GM12878 (cell line): ENCODE measurements at regions of chr1 and their contacts with region 1.

Region 1: DNA sequence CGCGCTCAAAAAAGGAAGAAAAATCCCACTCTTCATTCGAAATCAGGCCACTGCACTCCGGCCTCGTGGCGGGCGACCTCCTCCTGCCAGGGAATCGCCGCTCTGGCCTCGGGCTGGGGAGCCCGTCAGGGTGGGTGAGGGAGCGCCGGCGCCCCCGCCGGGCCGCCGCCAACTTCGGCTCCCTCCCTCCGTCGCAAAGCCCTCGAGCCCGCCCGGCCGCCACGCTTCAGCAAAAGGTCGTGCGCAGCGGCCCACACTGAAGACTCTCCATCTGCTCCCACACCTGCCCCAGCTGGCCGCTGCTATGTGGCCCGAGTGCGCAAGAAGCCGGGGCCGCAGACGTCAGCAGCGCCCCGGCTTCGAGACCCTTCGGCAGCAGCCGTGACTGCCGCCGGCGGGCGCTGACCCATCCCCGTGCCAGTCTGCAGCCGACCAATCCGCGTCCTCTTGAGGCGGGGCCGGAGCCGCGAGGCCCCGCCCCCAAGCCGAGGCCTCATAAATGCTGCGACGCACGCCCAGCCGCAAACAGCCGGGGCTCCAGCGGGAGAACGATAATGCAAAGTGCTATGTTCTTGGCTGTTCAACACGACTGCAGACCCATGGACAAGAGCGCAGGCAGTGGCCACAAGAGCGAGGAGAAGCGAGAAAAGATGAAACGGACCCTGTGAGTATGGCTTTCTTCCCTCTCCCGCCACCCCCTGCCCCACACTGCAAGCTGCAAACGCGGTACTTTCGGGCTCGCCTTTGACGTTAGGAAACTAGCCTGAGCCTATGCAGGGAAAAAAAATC is at the start of gene RGS2:
- DNase-seq: peak; percentile 36
- ATAC-seq: peak; percentile 93
- H3K4me3 ChIP-seq: peak within 1 kb of the TSS; percentile 66
- H3K27ac ChIP-seq: no peak within 1 kb of the TSS
- H3K4me1 ChIP-seq: peaks cover 11% of the 10 kb centered on the region
- H3K27me3 ChIP-seq: peaks cover 0 to 5% of the 10 kb centered on the region in 2 experiments; a peak in 3 of 4 replicates
- CTCF ChIP-seq: no peak
- EP300 ChIP-seq: no peak
- POLR2A ChIP-seq: peak; percentile 99
- RAD21 ChIP-seq: no peak
- polyA plus RNA-seq, gene RGS2: 1.9 to 2.3 TPM

Region 2: GRCh38 chr1:192732787-192733186 is 75.9 kb before region 1 on chr1:
- CTCF ChIA-PET with region 1: no interaction called
- POLR2A ChIA-PET with region 1: no interaction called
- RAD21 ChIA-PET with region 1: no interaction called
- SMC1A ChIA-PET with region 1: no interaction called
- in situ Hi-C with region 1: no loop called
- intact Hi-C with region 1: no loop called
- DNase-seq: no peak
- ATAC-seq: peak; percentile 79
- H3K4me3 ChIP-seq: no peak overlapping the region
- H3K27ac ChIP-seq: no peak overlapping the region
- H3K4me1 ChIP-seq: no peaks in the 10 kb centered on the region
- H3K27me3 ChIP-seq: no peaks in the 10 kb centered on the region
- CTCF ChIP-seq: peak in 2 of 3 experiments; percentile 7 to 22; a peak in 1 of 6 replicates
- EP300 ChIP-seq: no peak
- POLR2A ChIP-seq: no peak
- RAD21 ChIP-seq: no peak

Region 3: GRCh38 chr1:192913683-192914082 is 105.0 kb after region 1 on chr1:
- CTCF ChIA-PET with region 1: no interaction called
- POLR2A ChIA-PET with region 1: no interaction called
- RAD21 ChIA-PET with region 1: no interaction called
- SMC1A ChIA-PET with region 1: no interaction called
- in situ Hi-C with region 1: no loop called
- intact Hi-C with region 1: no loop called
- DNase-seq: no peak
- ATAC-seq: no peak
- H3K4me3 ChIP-seq: no peak overlapping the region
- H3K27ac ChIP-seq: no peak overlapping the region
- H3K4me1 ChIP-seq: no peaks in the 10 kb centered on the region
- H3K27me3 ChIP-seq: no peaks in the 10 kb centered on the region
- CTCF ChIP-seq: no peak
- EP300 ChIP-seq: no peak
- POLR2A ChIP-seq: no peak
- RAD21 ChIP-seq: no peak

Region 4: GRCh38 chr1:193013005-193013404 is 204.3 kb after region 1 on chr1:
- CTCF ChIA-PET with region 1: interaction called, 142 read pairs
- POLR2A ChIA-PET with region 1: no interaction called
- RAD21 ChIA-PET with region 1: interaction called, 10 read pairs
- SMC1A ChIA-PET with region 1: interaction called, 62 read pairs
- in situ Hi-C with region 1: loop called (anchors 5 kb)
- intact Hi-C with region 1: no loop called
- DNase-seq: no peak
- ATAC-seq: no peak
- H3K4me3 ChIP-seq: no peak overlapping the region
- H3K27ac ChIP-seq: no peak overlapping the region
- H3K4me1 ChIP-seq: no peaks in the 10 kb centered on the region
- H3K27me3 ChIP-seq: no peaks in the 10 kb centered on the region
- CTCF ChIP-seq: no peak
- EP300 ChIP-seq: no peak
- POLR2A ChIP-seq: no peak
- RAD21 ChIP-seq: no peak

Region 5: DNA sequence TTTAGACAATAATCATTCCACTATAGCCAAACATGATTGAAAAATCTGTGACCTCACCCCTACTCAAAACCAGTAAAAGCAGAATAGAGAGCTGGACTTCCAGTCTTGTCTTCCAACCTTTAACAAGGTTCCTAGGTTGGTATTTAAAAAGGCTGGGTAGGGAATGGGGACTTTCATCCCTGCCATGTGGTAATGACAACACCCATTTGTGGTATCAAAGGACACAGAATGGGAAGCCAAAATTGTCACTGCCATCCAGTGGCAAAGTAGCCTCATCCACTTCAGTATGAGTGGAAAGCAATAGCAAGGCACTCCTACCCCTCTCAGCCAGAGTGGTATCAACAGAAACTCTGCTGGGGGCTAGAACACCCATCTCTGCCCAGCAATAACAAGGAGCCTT is 216.5 kb after region 1 on chr1:
- CTCF ChIA-PET with region 1: interaction called, 142 read pairs
- POLR2A ChIA-PET with region 1: no interaction called
- RAD21 ChIA-PET with region 1: interaction called, 56 read pairs
- SMC1A ChIA-PET with region 1: interaction called, 62 read pairs
- in situ Hi-C with region 1: no loop called
- intact Hi-C with region 1: no loop called
- DNase-seq: no peak
- ATAC-seq: no peak
- H3K4me3 ChIP-seq: no peak overlapping the region
- H3K27ac ChIP-seq: no peak overlapping the region
- H3K4me1 ChIP-seq: no peaks in the 10 kb centered on the region
- H3K27me3 ChIP-seq: no peaks in the 10 kb centered on the region
- CTCF ChIP-seq: no peak
- EP300 ChIP-seq: no peak
- POLR2A ChIP-seq: no peak
- RAD21 ChIP-seq: no peak

Region 6: DNA sequence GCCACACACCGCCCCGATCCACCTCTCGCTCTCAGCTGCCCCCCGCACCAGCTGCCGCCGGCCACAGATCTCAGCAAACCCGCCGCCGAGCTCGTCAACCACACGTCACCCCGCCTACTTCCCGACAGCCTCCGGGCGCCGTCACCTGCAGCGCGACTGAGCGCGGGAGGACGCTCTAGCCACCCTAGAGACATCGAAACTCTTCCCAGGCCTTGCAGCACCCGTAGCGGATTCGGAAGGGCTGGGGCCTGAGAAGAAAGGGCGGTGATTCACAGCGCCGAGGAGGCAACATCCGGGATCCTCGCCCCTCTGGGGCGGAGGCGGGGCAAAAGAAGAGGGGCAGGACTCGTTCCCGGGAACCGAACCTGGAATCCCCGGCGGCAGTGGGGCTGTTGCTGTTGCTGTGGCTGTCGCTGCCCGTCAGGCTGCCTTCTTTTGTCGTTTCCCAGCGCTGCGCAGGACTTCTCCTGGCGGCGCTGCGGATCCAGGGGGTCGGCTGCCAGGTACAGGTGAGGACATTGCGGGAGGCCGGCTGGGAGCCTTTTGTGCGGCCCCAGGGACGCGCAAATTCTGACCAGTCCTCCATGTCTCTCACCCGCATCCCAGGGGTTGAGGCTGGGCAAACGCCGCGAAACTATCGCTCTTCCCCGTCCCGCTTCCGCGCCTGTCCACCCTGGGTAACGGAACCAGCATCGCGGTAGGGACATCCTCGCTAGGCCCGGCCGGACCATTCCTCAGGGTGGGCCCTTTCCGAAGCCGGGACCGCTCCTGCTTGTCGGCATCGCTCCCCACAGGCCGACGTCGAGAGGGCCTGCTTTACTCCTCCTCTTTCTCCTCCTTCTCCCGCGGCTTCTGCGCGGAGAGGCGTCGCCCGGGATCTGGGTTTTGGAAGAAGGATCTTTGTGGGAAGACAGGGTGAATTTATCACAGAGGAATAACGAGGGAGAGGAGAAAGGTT is 250.8 kb after region 1 on chr1 and contains the starts of genes RO60 and UCHL5:
- CTCF ChIA-PET with region 1: interaction called, 4 read pairs
- POLR2A ChIA-PET with region 1: interaction called, 6 read pairs
- RAD21 ChIA-PET with region 1: interaction called, 7 read pairs
- SMC1A ChIA-PET with region 1: interaction called, 11 read pairs
- in situ Hi-C with region 1: no loop called
- intact Hi-C with region 1: no loop called
- DNase-seq: peak; percentile 93
- ATAC-seq: peak; percentile 89
- H3K4me3 ChIP-seq: peak within 1 kb of the TSS; percentile 80
- H3K27ac ChIP-seq: peak within 1 kb of the TSS; percentile 95
- H3K4me1 ChIP-seq: peaks cover 28% of the 10 kb centered on the region
- H3K27me3 ChIP-seq: no peaks in the 10 kb centered on the region
- CTCF ChIP-seq: peak in 1 of 3 experiments; percentile 9; a peak in 1 of 6 replicates
- EP300 ChIP-seq: peak; percentile 38 to 60; a peak in 3 of 4 replicates
- POLR2A ChIP-seq: peak; percentile 95
- RAD21 ChIP-seq: no peak
- polyA plus RNA-seq, gene RO60: 25.4 to 103 TPM
- polyA plus RNA-seq, gene UCHL5: 36.5 to 45.6 TPM